ENCODE measurements at regions of chr3 and their contacts with region 1.

Region 1: GRCh38 chr3:106473576-106474475 is 605.0 kb upstream of the CBLB start:
- DNase-seq: no peak
- H3K4me3 Mint-ChIP-seq: no peak overlapping the region
- H3K27ac Mint-ChIP-seq: peak overlapping the region; percentile 94
- H3K4me1 Mint-ChIP-seq: peaks cover 18% of the 10 kb centered on the region
- H3K27me3 Mint-ChIP-seq: no peaks in the 10 kb centered on the region

Region 2: DNA sequence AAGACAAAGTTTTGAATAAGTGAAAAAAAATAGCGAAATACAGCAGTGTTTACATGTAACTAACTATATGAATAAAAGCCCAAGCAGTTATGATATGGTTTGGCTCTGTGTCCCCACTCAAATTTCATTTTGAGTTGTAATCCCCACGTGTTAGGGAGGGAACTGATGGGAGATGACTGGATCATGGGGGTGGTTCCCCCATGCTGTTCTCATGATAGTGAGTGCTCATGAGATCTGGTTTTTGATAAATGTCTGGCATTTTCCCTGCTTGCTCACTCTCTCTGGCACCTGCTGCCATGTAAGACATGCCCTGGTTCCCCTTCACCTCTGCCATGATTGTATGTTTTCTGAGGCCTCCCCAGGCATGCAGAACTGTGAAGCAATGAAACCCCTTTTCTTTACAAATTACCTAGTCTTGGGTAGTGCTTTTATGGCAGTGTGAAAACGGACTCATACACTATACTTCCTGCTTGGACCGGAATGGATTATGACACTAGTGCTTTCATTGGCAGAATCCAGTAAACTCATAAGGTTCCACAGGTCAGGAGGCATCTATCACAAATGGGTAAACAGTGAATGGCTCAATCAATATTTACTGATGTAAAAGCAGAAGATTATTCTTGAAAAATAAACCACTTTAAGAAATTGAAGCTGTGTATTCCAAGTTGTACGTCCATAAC is 797.1 kb before region 1 on chr3:
- intact Hi-C with region 1: loop called (anchors 1 kb)
- DNase-seq: no peak
- H3K4me3 Mint-ChIP-seq: peak overlapping the region; percentile 1
- H3K27ac Mint-ChIP-seq: peak overlapping the region; percentile 85
- H3K4me1 Mint-ChIP-seq: peaks cover 36% of the 10 kb centered on the region
- H3K27me3 Mint-ChIP-seq: no peaks in the 10 kb centered on the region

Region 3: GRCh38 chr3:106013971-106014370 is 459.9 kb before region 1 on chr3:
- intact Hi-C with region 1: loop called (anchors 1 kb)
- DNase-seq: no peak
- H3K4me3 Mint-ChIP-seq: no peak overlapping the region
- H3K27ac Mint-ChIP-seq: peak overlapping the region; percentile 5
- H3K4me1 Mint-ChIP-seq: peaks cover 65% of the 10 kb centered on the region
- H3K27me3 Mint-ChIP-seq: no peaks in the 10 kb centered on the region

Region 4: GRCh38 chr3:106247902-106248684 is 225.7 kb before region 1 on chr3:
- intact Hi-C with region 1: loop called (anchors 1 kb)
- DNase-seq: no peak
- H3K4me3 Mint-ChIP-seq: peak overlapping the region; percentile 16
- H3K27ac Mint-ChIP-seq: peak overlapping the region; percentile 67
- H3K4me1 Mint-ChIP-seq: peaks cover 32% of the 10 kb centered on the region
- H3K27me3 Mint-ChIP-seq: no peaks in the 10 kb centered on the region

Region 5: DNA sequence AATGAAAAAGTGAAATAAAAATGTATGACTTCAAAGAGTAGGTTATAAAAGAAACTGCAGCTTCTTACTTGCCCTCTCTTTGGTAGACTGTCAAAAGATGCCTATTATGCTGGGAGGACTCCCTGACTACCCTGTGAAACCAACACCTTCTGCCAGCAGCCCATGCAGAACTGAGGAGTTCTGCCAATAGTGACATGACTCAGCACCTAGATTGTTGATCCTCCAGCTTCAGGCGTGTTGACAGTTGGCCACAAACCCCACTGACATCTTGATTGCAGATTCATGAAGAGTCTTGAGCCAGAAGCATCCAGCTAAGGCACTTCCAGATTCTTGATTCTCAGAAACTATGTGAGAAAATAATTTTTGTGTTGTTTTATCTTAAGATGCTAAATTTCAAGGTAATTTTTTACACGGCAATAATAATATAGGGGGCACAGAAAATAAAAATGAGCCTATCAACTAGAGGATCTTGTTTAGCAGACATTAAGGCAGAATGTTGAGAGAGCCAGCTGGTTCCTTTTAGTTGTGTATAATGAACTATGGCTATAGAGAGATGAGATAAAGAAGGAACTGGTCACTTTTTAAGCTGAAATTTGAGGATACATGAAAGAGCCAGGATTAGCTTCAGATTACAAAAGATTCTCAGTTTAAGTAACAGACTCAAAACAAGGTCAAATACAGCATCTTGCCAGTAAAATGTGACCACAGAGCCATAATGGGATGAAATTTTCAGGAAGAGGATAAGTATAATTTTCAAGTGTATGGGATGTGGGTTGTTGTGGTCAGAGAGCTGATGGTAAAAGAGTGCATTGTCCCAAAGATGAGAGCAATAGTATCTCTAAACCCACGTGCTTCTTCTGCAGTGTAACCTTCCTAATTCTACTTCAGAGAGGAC is 16.3 kb before region 1 on chr3:
- intact Hi-C with region 1: loop called (anchors 2 kb)
- DNase-seq: peak; percentile 13
- H3K4me3 Mint-ChIP-seq: no peak overlapping the region
- H3K27ac Mint-ChIP-seq: peak overlapping the region; percentile 49
- H3K4me1 Mint-ChIP-seq: peaks cover 23% of the 10 kb centered on the region
- H3K27me3 Mint-ChIP-seq: no peaks in the 10 kb centered on the region

Region 6: DNA sequence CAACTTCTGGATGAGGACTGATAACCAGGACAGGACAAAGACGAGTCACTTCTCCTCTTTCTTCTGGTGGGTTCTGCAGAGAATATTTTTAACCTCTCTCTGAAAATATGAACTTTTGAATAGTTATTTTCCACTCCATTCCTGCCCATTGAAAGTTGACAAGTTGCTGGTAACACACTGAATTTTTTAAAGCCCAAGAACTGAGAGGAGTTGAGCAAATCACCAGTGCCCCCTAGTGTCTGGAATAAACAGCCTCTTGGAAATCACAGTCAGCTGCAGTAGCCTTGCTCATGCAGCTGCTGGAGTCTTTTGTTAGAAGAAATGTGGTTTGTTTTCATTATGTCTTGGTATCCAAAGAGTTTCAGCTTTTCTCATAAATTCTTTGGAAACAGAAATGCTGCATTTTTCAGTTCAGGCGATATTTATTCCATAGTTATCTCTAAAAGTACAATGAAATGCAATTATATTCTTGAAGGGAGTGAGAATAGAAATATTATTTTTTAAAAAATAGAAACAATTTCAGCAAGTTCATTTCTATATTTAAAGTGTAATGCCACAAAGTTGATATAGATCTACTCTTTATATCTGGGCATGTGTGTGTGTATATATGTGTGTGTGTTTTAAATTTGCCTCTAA is 136.0 kb after region 1 on chr3:
- intact Hi-C with region 1: loop called (anchors 2 kb)
- DNase-seq: peak; percentile 50
- H3K4me3 Mint-ChIP-seq: no peak overlapping the region
- H3K27ac Mint-ChIP-seq: peak overlapping the region; percentile 66
- H3K4me1 Mint-ChIP-seq: peaks cover 30% of the 10 kb centered on the region
- H3K27me3 Mint-ChIP-seq: no peaks in the 10 kb centered on the region

Measured in activated T-helper 1 cell treated with anti-CD3 and anti-CD28 coated beads, Interleukin-12 subunit alpha, Interleukin-12 subunit beta, Interleukin-2, Interleukin-4 antibody, amounts not matched to agents 30 ng/mL and 10 ng/mL and 1 ng/mL, durations not matched to agents 14 hours and 24 hours and 36 hours (primary cell).